A673 (cell line): ENCODE measurements at regions of chr17 and their contacts with region 1.

Region 1: GRCh38 chr17:2399572-2400473 is 1.0 kb downstream of the MNT start:
- DNase-seq: peak; percentile 97
- H3K4me3 ChIP-seq: peak overlapping the region; percentile 96
- H3K27ac ChIP-seq: peak overlapping the region; percentile 99
- H3K4me1 ChIP-seq: peaks cover 72% of the 10 kb centered on the region
- H3K27me3 ChIP-seq: no peaks in the 10 kb centered on the region
- CTCF ChIP-seq: no peak

Region 2: GRCh38 chr17:2336215-2336851 is 63.5 kb before region 1 on chr17 and contains the start of gene TSR1:
- CTCF ChIA-PET with region 1: no interaction called
- POLR2A ChIA-PET with region 1: no interaction called
- intact Hi-C with region 1: no loop called
- DNase-seq: peak; percentile 97
- H3K4me3 ChIP-seq: peak within 1 kb of the TSS; percentile 92
- H3K27ac ChIP-seq: peak within 1 kb of the TSS; percentile 79
- H3K4me1 ChIP-seq: peaks cover 21% of the 10 kb centered on the region
- H3K27me3 ChIP-seq: no peaks in the 10 kb centered on the region
- CTCF ChIP-seq: peak; percentile 36
- total RNA-seq, gene TSR1: 78.9 and 91.0 TPM in 2 replicates

Region 3: GRCh38 chr17:2592971-2593820 is 193.4 kb after region 1 on chr17 and contains the start of gene PAFAH1B1:
- CTCF ChIA-PET with region 1: no interaction called
- POLR2A ChIA-PET with region 1: no interaction called
- intact Hi-C with region 1: loop called (anchors 5 kb)
- DNase-seq: peak; percentile 95
- H3K4me3 ChIP-seq: peak within 1 kb of the TSS; percentile 97
- H3K27ac ChIP-seq: peak within 1 kb of the TSS; percentile 95
- H3K4me1 ChIP-seq: peaks cover 17% of the 10 kb centered on the region
- H3K27me3 ChIP-seq: no peaks in the 10 kb centered on the region
- CTCF ChIP-seq: 0 out of 2 replicates have a peak, but pooled peaks have one; percentile 14
- total RNA-seq, gene PAFAH1B1: 210 and 212 TPM in 2 replicates

Region 4: GRCh38 chr17:2904152-2904551 is 504.3 kb after region 1 on chr17:
- CTCF ChIA-PET with region 1: no interaction called
- POLR2A ChIA-PET with region 1: interaction called, 22 read pairs
- intact Hi-C with region 1: no loop called
- DNase-seq: no peak
- H3K4me3 ChIP-seq: no peak overlapping the region
- H3K27ac ChIP-seq: no peak overlapping the region
- H3K4me1 ChIP-seq: no peaks in the 10 kb centered on the region
- H3K27me3 ChIP-seq: no peaks in the 10 kb centered on the region
- CTCF ChIP-seq: no peak